Calu3 (cell line): ENCODE measurements at regions of chr5 and their contacts with region 1.

Region 1: DNA sequence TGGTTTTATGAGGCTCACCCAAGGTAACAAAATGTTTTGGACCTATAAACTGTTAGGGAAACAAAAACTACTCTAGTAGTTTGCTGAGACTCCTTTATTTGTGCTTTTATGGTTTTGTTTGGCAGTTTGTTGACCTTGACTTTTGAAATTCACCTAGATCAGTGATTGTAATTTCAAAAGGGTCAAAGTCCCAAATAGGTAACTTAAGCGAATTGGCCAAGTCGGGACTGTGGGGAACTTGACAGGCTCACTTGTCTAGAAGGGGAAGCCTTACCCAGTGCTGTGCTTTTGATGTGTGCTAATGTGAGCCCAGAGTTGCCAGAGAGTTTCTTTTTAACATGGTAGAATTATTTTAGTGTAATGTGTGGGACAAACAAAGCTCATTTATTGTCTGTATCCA is 87.2 kb upstream of the SGCD start:
- DNase-seq: no peak
- H3K4me3 Mint-ChIP-seq: no peak overlapping the region
- H3K27ac Mint-ChIP-seq: no peak overlapping the region
- H3K4me1 Mint-ChIP-seq: no peaks in the 10 kb centered on the region
- H3K27me3 Mint-ChIP-seq: no peaks in the 10 kb centered on the region
- CTCF ChIP-seq: no peak

Region 2: DNA sequence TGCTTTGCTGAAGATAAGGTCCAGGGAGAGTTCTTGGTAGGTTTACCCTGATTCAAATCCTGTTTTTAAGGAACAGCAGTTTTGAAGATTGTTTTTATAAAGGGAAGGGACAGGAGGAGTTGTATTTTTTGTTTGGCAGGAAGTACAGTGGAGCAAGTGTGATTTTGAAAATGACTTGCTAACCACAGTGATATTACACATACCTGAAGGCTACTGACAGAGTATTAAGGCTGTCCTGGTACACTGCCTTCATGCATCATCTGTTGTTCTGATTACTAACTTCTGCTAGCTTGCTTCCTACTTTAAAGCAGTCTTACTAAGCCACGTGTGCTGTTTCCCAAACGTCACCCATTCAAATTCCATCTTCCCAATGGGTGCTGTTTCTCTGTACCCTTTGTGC is 472.3 kb before region 1 on chr5:
- CTCF ChIA-PET with region 1: no interaction called
- intact Hi-C with region 1: no loop called
- DNase-seq: no peak
- H3K4me3 Mint-ChIP-seq: no peak overlapping the region
- H3K27ac Mint-ChIP-seq: no peak overlapping the region
- H3K4me1 Mint-ChIP-seq: no peaks in the 10 kb centered on the region
- H3K27me3 Mint-ChIP-seq: no peaks in the 10 kb centered on the region
- CTCF ChIP-seq: no peak

Region 3: GRCh38 chr5:156201788-156202403 is 37.9 kb before region 1 on chr5:
- CTCF ChIA-PET with region 1: no interaction called
- intact Hi-C with region 1: no loop called
- DNase-seq: no peak
- H3K4me3 Mint-ChIP-seq: no peak overlapping the region
- H3K27ac Mint-ChIP-seq: no peak overlapping the region
- H3K4me1 Mint-ChIP-seq: no peaks in the 10 kb centered on the region
- H3K27me3 Mint-ChIP-seq: no peaks in the 10 kb centered on the region
- CTCF ChIP-seq: no peak

Region 4: GRCh38 chr5:156219483-156220005 is 20.3 kb before region 1 on chr5:
- CTCF ChIA-PET with region 1: interaction called, 14 read pairs
- intact Hi-C with region 1: no loop called
- DNase-seq: no peak
- H3K4me3 Mint-ChIP-seq: no peak overlapping the region
- H3K27ac Mint-ChIP-seq: no peak overlapping the region
- H3K4me1 Mint-ChIP-seq: no peaks in the 10 kb centered on the region
- H3K27me3 Mint-ChIP-seq: no peaks in the 10 kb centered on the region
- CTCF ChIP-seq: no peak